ENCODE measurements at regions of chr9 and their contacts with region 1.

Region 1: GRCh38 chr9:69054989-69055388 is 19.4 kb downstream of the FXN start:
- DNase-seq: no peak
- ATAC-seq: no peak

Region 2: DNA sequence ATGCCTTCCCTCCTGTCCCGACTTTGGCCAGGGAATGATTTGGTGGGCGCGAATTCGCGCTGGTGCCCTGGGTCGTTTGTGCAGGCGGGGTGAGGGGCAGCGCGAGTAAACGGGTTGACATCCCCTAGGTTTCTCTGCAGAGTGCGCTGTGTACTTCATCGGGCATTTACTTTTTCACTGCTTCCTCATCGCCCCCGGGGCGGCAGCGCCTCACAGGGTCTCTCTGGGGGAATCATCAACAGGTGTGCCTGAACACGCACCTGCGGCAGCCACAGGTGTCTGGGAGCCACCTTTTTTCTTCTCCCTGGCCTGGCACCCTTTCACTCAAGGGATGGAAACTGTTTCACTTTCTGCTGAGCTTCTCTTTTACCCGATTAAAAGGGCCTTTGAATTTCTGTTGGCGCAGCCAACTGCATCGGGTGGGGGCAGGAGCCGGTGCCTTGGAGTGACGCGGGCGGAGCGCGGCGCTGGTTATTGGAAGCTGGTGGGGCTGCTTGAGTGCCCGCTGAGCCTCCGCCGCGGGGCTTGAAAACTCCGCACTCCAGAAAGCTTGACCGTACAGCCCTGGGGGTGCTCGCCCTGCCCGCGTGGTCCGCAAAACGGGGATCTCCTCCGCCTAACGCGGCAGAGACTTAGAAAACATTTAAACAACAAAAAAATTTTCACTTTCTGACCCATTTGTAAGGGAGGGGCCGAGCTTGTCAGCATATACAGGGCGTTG is 67.0 kb after region 1 on chr9:
- intact Hi-C with region 1: loop called (anchors 5 kb)
- DNase-seq: peak; percentile 85
- ATAC-seq: peak; percentile 90

Region 3: GRCh38 chr9:69168709-69169217 is 113.8 kb after region 1 on chr9:
- intact Hi-C with region 1: no loop called
- DNase-seq: no peak
- ATAC-seq: no peak

Measured in Right ventricle myocardium superior (tissue), 1 donor.